Right ventricle myocardium superior (tissue), 1 donor: ENCODE measurements at regions of chr1 and their contacts with region 1.

Region 1: DNA sequence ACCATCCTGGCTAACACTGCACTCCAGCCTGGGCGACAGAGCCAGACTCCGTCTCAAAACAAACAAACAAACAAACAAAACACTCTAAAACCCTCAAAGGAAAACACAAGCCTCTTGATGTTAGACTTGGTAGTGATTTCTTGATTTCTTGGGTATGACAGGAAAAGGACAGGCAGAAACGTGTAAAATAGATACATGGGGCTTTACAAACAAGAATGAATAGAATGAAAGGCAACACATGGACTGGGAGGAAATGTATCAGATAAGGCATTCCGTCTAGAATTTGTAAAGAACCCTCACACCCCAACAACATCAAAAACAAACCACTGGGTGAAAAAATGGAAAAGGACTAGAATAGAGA is 7.8 kb upstream of the PRXL2B start:
- DNase-seq: no peak
- ATAC-seq: no peak

Region 2: GRCh38 chr1:2545759-2546514 is 32.8 kb before region 1 on chr1:
- intact Hi-C with region 1: loop called (anchors 2 kb)
- DNase-seq: peak; percentile 93
- ATAC-seq: peak; percentile 68